Thyroid gland (tissue), 4 donors: ENCODE measurements at regions of chr1 and their contacts with region 1.

Region 1: GRCh38 chr1:62530516-62531154 is 66.7 kb upstream of the ANGPTL3 start:
- DNase-seq: peak; percentile 68 to 73
- H3K4me3 ChIP-seq: no peak overlapping the region
- H3K27ac ChIP-seq: no peak overlapping the region
- H3K4me1 ChIP-seq: no peaks in the 10 kb centered on the region
- H3K27me3 ChIP-seq: no peaks in the 10 kb centered on the region
- CTCF ChIP-seq: peak in 4 of 6 experiments; percentile 44 to 77 (median 72)
- POLR2A ChIP-seq: no peak

Region 2: DNA sequence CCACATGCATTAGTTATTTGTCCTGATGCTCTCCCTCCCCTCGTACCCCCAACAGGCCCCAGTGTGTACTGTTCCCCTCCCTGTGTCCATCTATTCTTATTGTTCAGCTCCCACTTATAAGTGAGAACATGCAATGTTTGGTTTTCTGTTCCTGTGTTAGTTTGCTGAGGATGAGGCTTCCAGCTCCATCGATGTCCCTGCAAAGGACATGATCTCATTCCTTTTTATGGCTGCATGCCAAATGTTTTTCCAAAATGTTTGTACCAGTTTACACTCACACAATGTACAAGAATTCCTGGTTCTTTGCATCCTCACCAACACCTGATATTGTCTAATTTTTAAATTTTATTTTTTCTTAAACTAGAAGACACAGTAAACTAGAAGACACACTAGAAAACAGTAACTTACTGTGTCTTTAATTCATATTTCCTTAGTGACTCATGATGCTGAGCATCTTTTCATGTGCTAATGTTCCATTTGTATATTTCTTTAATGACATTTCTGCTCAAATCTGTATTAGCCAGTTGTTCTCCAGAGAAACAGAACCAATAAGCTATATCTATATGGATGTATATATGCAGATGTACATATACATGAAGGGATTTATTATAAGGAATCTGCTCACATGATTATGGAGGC is 113.2 kb before region 1 on chr1:
- intact Hi-C with region 1: no loop called
- DNase-seq: no peak
- H3K4me3 ChIP-seq: no peak overlapping the region
- H3K27ac ChIP-seq: no peak overlapping the region
- H3K4me1 ChIP-seq: no peaks in the 10 kb centered on the region
- H3K27me3 ChIP-seq: no peaks in the 10 kb centered on the region
- CTCF ChIP-seq: no peak
- POLR2A ChIP-seq: no peak

Region 3: GRCh38 chr1:62735491-62736171 is 205.0 kb after region 1 on chr1:
- intact Hi-C with region 1: loop called (anchors 10 kb)
- DNase-seq: no peak
- H3K4me3 ChIP-seq: no peak overlapping the region
- H3K27ac ChIP-seq: peak overlapping the region in 1 of 3 donors; percentile 9
- H3K4me1 ChIP-seq: peaks cover 0 to 5% of the 10 kb centered on the region in 2 donors
- H3K27me3 ChIP-seq: no peaks in the 10 kb centered on the region
- CTCF ChIP-seq: no peak
- POLR2A ChIP-seq: no peak